ENCODE measurements at regions of chr12 and their contacts with region 1.

Region 1: GRCh38 chr12:42683933-42684801 is 94.6 kb upstream of the PRICKLE1 start:
- DNase-seq: peak; percentile 71
- ATAC-seq: peak; percentile 75
- H3K4me3 ChIP-seq: no peak overlapping the region
- H3K27ac ChIP-seq: peak overlapping the region; percentile 49
- H3K4me1 ChIP-seq: peaks cover 40% of the 10 kb centered on the region
- H3K27me3 ChIP-seq: no peaks in the 10 kb centered on the region
- CTCF ChIP-seq: no peak

Region 2: DNA sequence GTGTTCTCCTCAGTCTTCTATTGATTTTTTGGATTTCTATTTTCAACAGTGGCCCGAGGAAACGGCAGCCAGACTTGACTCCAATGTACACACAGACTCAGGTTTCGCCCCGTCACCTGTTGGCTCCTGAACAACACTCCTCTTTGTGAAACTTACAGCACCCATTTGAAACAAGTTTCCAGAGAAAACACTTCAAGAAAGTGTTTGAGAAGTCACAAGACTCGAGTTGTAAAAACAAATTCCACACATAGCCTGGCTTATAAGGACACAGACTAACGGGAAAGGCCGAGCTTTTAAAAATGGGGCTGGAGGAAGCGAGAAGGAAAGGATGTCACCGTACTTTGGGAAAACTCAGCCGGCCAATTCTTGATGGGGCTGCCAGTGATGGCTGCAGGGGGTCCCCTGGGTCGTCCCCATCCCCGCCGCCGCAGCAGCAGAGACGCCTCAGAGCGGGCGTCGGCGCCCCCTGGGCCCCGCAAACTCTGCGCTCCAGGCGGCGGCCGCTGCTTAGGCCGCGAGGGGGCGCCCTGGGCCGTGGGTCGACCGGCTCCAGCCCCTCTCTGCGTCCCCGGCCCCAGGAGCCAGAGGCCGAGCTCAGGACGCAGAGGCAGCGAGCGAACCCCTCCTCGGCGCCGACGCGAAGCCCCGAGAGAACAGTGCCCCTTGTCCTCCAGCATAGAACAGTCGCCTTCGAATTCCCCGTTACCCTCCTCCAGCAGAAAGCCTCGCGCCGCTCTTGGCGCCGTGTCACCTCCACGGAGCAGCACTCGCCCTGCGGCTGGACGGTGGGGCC is 201.5 kb before region 1 on chr12:
- CTCF ChIA-PET with region 1: no interaction called
- POLR2A ChIA-PET with region 1: no interaction called
- intact Hi-C with region 1: loop called (anchors 2 kb)
- DNase-seq: peak; percentile 73
- ATAC-seq: peak; percentile 82
- H3K4me3 ChIP-seq: peak overlapping the region; percentile 78
- H3K27ac ChIP-seq: peak overlapping the region; percentile 54
- H3K4me1 ChIP-seq: peaks cover 18% of the 10 kb centered on the region; the same call in 1 of the 2 replicates
- H3K27me3 ChIP-seq: no peaks in the 10 kb centered on the region
- CTCF ChIP-seq: peak; percentile 94

Region 3: DNA sequence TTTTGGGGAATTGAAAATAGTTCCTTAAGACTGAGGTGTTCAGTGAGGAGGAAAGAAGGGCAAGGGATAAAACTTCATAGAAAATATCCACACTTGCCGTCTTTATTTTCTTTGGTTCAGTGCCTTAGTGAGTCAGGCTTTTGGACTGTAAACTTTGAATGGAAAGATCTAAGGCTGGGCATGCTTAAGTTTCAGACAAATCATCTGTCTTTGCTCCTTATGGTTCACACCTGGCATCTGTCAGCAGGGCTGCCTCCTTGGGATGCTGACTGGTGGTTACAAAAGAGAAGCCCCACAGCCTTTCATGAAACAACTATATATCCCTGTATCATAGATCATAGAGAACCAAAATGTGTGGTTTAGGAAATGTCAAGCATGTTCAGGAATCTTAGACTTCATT is 41.7 kb after region 1 on chr12:
- CTCF ChIA-PET with region 1: no interaction called
- POLR2A ChIA-PET with region 1: no interaction called
- intact Hi-C with region 1: no loop called
- DNase-seq: peak; percentile 80
- ATAC-seq: peak; percentile 66
- H3K4me3 ChIP-seq: no peak overlapping the region
- H3K27ac ChIP-seq: no peak overlapping the region
- H3K4me1 ChIP-seq: peaks cover 41% of the 10 kb centered on the region
- H3K27me3 ChIP-seq: no peaks in the 10 kb centered on the region
- CTCF ChIP-seq: no peak

Region 4: GRCh38 chr12:42744539-42745156 is 60.5 kb after region 1 on chr12:
- CTCF ChIA-PET with region 1: no interaction called
- POLR2A ChIA-PET with region 1: no interaction called
- intact Hi-C with region 1: loop called (anchors 5 kb)
- DNase-seq: peak; percentile 90
- ATAC-seq: peak; percentile 34
- H3K4me3 ChIP-seq: no peak overlapping the region
- H3K27ac ChIP-seq: peak overlapping the region; percentile 33
- H3K4me1 ChIP-seq: peaks cover 44% of the 10 kb centered on the region
- H3K27me3 ChIP-seq: no peaks in the 10 kb centered on the region
- CTCF ChIP-seq: no peak

Region 5: DNA sequence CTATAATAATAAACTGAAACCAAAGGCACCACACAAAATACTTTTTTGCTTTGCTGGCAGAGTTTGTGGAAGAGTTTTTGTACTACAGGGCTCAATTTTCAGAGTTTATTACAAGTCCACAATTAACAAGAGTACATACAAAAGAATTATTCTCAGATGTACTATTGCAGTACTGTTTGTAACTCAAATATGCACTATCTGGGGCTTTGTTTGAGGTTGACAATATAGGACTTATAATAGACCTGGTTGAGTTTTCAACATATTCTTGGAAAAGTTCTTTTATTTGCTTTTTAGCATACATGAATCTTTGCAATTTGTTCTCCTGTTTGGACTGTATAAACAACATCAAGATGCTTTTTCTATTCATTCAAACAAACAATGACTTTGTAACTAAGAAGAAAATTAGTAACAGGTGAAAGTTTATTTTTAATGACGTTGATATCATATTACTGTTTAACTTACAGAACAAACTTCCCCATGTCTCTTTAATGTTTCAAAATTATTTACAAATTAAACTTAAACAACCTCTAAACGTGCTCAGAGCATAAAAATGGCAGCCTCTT is 312.8 kb after region 1 on chr12:
- CTCF ChIA-PET with region 1: no interaction called
- POLR2A ChIA-PET with region 1: no interaction called
- intact Hi-C with region 1: loop called (anchors 1 kb)
- DNase-seq: peak; percentile 31
- ATAC-seq: peak; percentile 73
- H3K4me3 ChIP-seq: no peak overlapping the region
- H3K27ac ChIP-seq: peak overlapping the region; percentile 37
- H3K4me1 ChIP-seq: peaks cover 17% of the 10 kb centered on the region
- H3K27me3 ChIP-seq: no peaks in the 10 kb centered on the region
- CTCF ChIP-seq: no peak

Measured in PC-3 (cell line).